ENCODE measurements at regions of chr16 and their contacts with region 1.

Region 1: DNA sequence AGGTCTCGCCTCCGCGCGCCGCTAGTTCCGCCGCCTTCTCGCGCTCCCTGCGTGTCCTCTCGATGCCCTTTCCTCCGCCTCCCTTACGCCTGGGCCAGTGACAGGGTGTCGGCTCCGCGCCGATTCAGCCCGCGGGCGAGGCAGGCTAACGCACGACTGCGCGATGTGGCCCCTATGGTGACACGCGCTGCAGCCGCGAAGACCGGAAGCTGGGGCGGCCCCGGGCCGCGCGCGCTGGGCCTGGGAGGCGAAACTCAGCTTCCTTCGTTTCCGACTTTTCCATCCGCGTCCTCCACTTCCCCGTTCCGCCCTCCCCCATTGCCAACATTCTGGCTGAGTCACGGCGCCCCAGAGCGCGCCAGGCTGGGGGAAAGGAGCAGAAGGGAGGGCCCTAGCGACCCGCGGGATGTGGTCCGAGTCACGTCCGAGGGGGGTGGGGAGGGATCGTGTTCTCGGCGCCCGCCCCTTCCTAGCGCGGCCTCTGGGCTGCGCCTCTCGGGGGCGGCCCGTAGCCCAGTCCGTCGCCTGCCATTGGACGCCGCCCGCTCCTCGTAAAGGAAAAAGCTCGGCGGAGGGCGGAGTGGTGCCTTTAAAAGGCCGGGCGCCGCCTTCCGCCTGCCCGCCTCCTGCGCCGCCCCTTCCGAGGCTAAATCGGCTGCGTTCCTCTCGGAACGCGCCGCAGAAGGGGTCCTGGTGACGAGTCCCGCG is at the start of gene ALDOA:
- DNase-seq: peak; percentile 95
- H3K4me3 Mint-ChIP-seq: peak within 1 kb of the TSS; percentile 99
- H3K27ac Mint-ChIP-seq: peak within 1 kb of the TSS; percentile 95
- H3K4me1 Mint-ChIP-seq: peaks cover 25% of the 10 kb centered on the region
- H3K27me3 Mint-ChIP-seq: peaks cover 1% of the 10 kb centered on the region
- total RNA-seq, gene ALDOA: 1,715 and 1,718 TPM in 2 replicates

Region 2: DNA sequence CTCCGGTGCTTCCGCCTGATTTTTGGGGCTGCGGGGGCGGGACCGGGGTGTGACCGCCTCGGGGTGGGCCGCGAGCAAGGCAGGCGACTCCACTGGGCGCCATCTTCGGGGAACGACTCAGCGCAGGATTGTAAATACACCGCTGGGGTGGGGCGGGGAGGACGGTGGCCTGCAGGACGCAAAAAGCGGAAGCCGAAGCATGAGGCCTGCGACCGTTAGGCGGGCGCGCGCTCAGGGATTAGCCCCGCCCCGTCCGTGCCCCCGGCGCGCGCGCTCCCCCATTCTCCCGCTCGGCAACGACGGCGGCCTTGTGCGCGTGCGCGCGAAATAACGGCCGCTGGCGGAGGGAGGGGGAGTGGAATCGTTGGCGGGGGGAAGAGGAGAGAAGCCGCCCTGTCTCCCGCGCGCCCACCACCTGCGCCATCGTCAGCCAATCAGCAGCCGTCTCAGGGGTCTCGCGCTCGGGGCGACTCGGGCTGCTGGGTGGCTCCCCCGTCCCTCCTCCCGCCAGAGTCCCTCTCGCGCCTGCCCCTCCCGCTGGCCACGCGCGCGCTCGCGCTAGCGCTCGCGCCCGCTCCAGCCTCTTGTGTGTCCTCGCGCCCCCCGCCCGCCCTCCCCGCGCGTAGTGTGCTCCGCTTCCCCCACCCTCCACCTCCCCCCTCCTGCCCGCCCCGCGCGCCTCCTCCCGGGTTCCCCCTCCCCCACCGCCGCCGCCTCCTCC is 259.8 kb before region 1 on chr16:
- intact Hi-C with region 1: loop called (anchors 5 kb)
- DNase-seq: peak; percentile 97
- H3K4me3 Mint-ChIP-seq: peak overlapping the region; percentile 100
- H3K27ac Mint-ChIP-seq: peak overlapping the region; percentile 100
- H3K4me1 Mint-ChIP-seq: peaks cover 42% of the 10 kb centered on the region
- H3K27me3 Mint-ChIP-seq: no peaks in the 10 kb centered on the region

Region 3: GRCh38 chr16:29973384-29974246 is 91.7 kb before region 1 on chr16 and contains the start of gene TAOK2:
- intact Hi-C with region 1: loop called (anchors 1 kb)
- DNase-seq: peak; percentile 97
- H3K4me3 Mint-ChIP-seq: peak within 1 kb of the TSS; percentile 92
- H3K27ac Mint-ChIP-seq: peak within 1 kb of the TSS; percentile 91
- H3K4me1 Mint-ChIP-seq: peaks cover 36% of the 10 kb centered on the region
- H3K27me3 Mint-ChIP-seq: no peaks in the 10 kb centered on the region
- total RNA-seq, gene TAOK2: 38.5 and 39.7 TPM in 2 replicates

Region 4: DNA sequence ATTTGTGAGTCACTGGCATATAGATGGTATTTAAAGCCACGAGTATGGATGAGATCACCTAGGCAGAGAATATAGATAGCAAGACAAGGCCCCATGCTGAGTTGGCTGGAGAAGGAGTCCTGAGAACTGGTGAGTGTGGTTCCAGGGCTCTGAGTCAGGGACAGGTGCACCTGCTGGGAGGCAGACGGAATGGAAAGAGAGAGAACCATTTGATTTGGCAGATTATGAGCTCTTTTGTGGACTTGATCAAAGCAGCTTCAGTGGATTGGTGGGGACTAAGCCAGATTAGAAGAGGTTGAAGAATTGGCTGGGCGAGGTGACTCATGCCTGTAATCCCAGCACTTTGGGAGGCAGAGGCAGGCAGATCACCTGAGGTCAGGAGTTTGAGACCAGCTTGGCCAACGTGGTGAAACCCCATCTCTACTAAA is 46.6 kb before region 1 on chr16:
- intact Hi-C with region 1: loop called (anchors 1 kb)
- DNase-seq: no peak
- H3K4me3 Mint-ChIP-seq: no peak overlapping the region
- H3K27ac Mint-ChIP-seq: peak overlapping the region; percentile 1
- H3K4me1 Mint-ChIP-seq: peaks cover 17% of the 10 kb centered on the region
- H3K27me3 Mint-ChIP-seq: peaks cover 12% of the 10 kb centered on the region

Region 5: GRCh38 chr16:30046184-30046583 is 19.1 kb before region 1 on chr16:
- intact Hi-C with region 1: no loop called
- DNase-seq: no peak
- H3K4me3 Mint-ChIP-seq: no peak overlapping the region
- H3K27ac Mint-ChIP-seq: no peak overlapping the region
- H3K4me1 Mint-ChIP-seq: no peaks in the 10 kb centered on the region
- H3K27me3 Mint-ChIP-seq: peaks cover 18% of the 10 kb centered on the region

Region 6: GRCh38 chr16:30075507-30076275 is 10.4 kb after region 1 on chr16 and contains the start of gene PPP4C:
- intact Hi-C with region 1: loop called (anchors 1 kb)
- DNase-seq: peak; percentile 92
- H3K4me3 Mint-ChIP-seq: peak within 1 kb of the TSS; percentile 97
- H3K27ac Mint-ChIP-seq: peak within 1 kb of the TSS; percentile 96
- H3K4me1 Mint-ChIP-seq: peaks cover 44% of the 10 kb centered on the region
- H3K27me3 Mint-ChIP-seq: no peaks in the 10 kb centered on the region
- total RNA-seq, gene PPP4C: 133 and 147 TPM in 2 replicates

Region 7: DNA sequence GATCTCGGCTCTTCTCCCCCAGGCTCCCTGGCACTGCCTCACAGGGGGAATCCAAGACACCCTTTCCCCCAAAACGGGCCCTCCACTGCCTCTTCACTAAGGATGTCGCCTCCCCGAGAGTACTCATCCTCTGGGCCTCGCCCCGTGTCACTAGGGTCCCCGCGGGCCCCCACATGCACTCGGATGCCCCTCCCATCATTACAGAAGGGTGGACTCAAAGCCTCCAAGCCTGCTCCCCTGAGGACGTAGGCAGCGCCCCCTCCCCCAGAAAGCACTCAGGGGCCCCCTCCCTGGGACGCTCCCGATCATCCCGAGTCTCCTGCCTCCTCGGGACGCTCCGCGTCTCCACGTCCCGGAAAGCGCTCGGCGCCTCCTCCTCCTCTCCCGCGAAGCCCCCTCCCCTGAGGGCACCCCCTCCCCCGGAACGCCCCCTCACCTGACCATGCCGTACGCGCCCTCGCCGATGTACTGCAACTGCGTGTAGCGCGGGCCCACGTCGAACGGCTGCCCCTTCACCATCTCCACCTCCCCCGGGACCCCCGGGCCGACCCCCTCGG is 57.4 kb after region 1 on chr16:
- intact Hi-C with region 1: loop called (anchors 2 kb)
- DNase-seq: peak; percentile 6
- H3K4me3 Mint-ChIP-seq: peak overlapping the region; percentile 90
- H3K27ac Mint-ChIP-seq: peak overlapping the region; percentile 91
- H3K4me1 Mint-ChIP-seq: peaks cover 32% of the 10 kb centered on the region
- H3K27me3 Mint-ChIP-seq: no peaks in the 10 kb centered on the region

Region 8: DNA sequence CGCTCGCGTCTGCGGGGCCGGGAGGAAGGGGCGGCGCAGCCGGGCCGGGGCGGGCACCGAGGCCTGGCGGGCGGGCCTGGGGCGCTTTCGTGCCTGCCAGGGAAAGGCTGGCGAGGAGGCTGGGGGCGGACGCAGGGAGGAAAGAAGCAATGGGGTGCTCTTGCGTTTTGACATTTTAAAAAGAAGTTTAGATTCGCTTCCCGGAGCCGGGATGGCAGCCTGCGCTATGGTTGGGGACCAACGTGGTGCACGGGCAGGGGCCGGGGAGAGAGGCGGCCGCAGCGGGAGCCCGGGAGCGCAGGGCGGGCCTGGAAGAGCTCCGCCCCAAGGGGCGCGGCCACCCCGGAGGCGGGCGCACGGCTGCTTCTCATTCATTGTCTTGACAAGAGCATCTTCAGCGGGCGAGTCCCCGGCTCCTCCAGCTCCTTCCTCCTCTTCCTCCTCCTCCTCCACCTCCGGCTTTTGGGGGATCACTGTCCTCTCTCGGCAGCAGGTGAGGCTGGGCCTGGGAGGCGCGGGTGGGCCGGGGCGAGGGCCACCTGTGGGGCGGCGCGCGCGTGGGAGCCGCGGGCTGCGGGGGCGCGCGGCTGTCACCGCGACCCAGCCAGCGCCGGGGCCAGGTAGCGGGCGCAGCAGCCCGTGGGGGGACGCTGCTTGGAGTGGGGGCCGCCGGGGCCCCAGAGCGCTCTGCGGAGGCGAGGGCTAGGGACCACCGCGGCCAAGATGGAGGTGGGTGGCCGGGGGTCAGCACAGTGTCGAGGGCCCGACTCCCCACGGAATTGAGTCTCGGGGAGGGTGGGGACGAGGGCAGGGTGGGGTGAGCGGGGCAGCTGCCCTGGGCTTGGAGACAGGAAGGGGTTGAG is 118.2 kb after region 1 on chr16 and contains the start of gene CORO1A:
- intact Hi-C with region 1: no loop called
- DNase-seq: peak; percentile 82
- H3K4me3 Mint-ChIP-seq: peak within 1 kb of the TSS; percentile 100
- H3K27ac Mint-ChIP-seq: peak within 1 kb of the TSS; percentile 99
- H3K4me1 Mint-ChIP-seq: peaks cover 27% of the 10 kb centered on the region
- H3K27me3 Mint-ChIP-seq: no peaks in the 10 kb centered on the region
- total RNA-seq, gene CORO1A: 816 and 819 TPM in 2 replicates

Region 9: GRCh38 chr16:30429678-30430427 is 364.6 kb after region 1 on chr16 and contains the start of gene DCTPP1:
- intact Hi-C with region 1: loop called (anchors 1 kb)
- DNase-seq: peak; percentile 96
- H3K4me3 Mint-ChIP-seq: no peak within 1 kb of the TSS
- H3K27ac Mint-ChIP-seq: no peak within 1 kb of the TSS
- H3K4me1 Mint-ChIP-seq: peaks cover 31% of the 10 kb centered on the region
- H3K27me3 Mint-ChIP-seq: no peaks in the 10 kb centered on the region
- total RNA-seq, gene DCTPP1: 173 and 178 TPM in 2 replicates